Transverse colon (tissue), 4 donors: ENCODE measurements at regions of chr4 and their contacts with region 1.

Region 1: DNA sequence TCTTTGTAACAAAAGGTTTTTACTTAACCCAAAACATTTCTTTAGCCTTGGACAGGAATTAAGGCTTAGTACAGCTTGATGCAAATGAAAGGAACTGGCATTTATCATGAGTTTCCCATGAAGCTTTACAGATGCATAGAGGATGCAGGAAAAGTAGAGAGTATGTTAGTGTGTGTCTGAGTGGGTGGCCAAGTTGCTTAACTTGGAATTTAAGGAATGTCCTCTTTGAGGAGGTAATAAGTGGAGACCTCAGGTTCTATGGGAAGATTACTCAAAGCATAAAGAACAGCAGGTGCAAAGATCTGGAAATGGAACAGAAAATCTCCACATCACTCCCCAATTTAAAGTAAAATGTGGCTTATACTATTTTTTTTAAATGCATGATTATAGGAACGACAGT is 457.9 kb downstream of the KCNIP4 start:
- DNase-seq: no peak
- H3K4me3 ChIP-seq: no peak overlapping the region
- H3K27ac ChIP-seq: no peak overlapping the region
- H3K4me1 ChIP-seq: no peaks in the 10 kb centered on the region
- H3K27me3 ChIP-seq: no peaks in the 10 kb centered on the region
- CTCF ChIP-seq: no peak
- EP300 ChIP-seq: no peak
- POLR2A ChIP-seq: no peak

Region 2: DNA sequence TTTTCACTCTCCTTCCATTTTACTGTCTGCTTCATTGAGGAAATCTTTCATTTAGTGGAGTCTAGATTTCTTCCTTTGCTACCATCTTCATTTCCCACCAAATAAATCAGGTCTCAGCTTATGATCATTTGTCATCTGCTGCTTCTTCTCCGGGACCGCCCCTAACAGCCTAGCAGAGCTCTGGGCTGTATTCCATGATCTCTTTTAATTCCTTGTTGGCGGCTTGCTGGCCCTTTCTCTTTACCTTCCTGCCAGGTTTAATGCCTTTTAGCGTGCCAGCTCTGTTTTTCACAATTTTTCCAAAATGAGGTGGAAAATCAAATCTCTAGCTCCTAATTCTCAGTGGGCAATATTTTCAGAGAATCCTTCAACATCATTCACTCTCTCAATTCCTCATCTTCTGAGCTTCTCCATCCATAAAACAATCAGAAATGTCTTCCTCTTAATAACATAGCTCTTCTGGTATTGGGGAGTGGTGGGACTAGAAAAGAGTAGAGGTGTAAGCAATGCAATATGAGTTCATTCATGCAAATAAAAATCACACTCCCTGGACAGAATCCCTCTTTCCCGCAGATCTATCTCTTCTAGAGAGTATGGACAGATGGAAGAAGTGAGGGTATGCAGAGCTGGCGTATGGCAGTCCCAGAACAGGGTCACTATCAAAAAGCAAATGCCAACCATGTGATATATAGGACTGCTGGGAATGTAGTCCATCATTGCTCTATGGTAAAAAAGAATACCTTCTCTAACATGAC is 33.4 kb before region 1 on chr4:
- in situ Hi-C with region 1: no loop called
- intact Hi-C with region 1: loop called (anchors 1 kb)
- DNase-seq: no peak
- H3K4me3 ChIP-seq: no peak overlapping the region
- H3K27ac ChIP-seq: no peak overlapping the region
- H3K4me1 ChIP-seq: no peaks in the 10 kb centered on the region
- H3K27me3 ChIP-seq: no peaks in the 10 kb centered on the region
- CTCF ChIP-seq: no peak
- EP300 ChIP-seq: no peak
- POLR2A ChIP-seq: no peak

Region 3: DNA sequence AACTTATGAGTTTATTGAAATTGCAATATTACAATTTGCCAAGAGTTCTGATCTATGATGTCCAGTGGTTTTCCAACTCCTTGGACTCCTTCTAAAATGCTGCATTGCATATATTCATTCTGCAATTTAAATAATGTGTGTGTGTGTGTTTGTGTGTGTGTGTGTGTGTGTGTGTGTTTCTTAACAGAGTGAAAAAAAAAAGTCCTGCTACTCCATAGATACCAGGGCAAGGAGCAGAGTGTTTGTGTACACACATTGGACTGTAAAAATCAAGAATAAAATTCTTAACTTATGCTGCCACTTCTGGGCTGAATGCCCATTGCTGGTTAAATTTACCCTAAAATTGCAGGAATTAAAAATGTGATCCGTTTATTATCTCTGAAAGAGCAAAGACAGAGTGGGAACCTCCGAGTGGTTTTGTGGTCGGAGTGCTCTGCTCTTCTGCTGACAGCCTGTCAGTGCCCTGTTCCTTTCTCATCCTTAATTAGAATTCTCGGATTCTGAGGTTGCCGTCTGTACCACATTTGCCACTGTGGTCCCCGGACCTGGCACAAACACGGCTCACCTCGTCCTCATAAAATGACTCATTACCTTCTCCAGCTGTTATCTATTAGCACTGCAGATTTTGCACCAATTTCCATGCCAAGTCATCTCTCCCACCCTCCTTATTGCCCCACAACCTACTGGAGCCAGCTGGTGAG is 102.4 kb after region 1 on chr4:
- in situ Hi-C with region 1: no loop called
- intact Hi-C with region 1: no loop called
- DNase-seq: no peak
- H3K4me3 ChIP-seq: no peak overlapping the region
- H3K27ac ChIP-seq: no peak overlapping the region
- H3K4me1 ChIP-seq: no peaks in the 10 kb centered on the region
- H3K27me3 ChIP-seq: no peaks in the 10 kb centered on the region
- CTCF ChIP-seq: no peak
- EP300 ChIP-seq: no peak
- POLR2A ChIP-seq: no peak